ENCODE measurements at regions of chr20 and their contacts with region 1.

Region 1: GRCh38 chr20:53578492-53579222 is 15.0 kb downstream of the ZNF217 start:
- DNase-seq: peak in 1 of 2 donors; percentile 85
- ATAC-seq: peak; percentile 57 to 86 (median 77)
- H3K4me3 ChIP-seq: peak overlapping the region in 5 of 10 donors; percentile 5 to 33 (median 17)
- H3K27ac ChIP-seq: peak overlapping the region in 8 of 10 donors; percentile 12 to 86 (median 62)
- H3K4me1 ChIP-seq: peaks cover 3 to 75% (median 55%) of the 10 kb centered on the region in 9 donors
- H3K27me3 ChIP-seq: no peaks in the 10 kb centered on the region
- CTCF ChIP-seq: peak; percentile 80 to 95 (median 87)

Region 2: DNA sequence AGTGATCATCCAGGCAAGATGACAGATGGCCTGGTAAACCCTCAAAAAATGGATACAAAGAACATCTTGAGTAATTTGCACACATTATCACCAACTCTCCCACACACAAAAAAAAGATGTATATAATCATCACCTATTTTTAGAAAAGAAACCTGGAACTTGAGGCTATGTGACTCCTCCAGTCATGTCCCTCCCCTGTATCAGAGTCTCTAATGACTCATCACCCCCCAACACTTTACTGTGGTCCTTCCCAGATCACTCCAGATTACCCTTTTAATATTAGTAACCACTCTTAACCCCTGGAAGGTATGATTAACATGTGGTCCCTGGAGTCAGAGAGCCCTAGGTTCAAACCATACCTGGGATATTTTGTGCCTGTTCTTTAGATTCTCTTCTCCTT is 129.8 kb before region 1 on chr20:
- intact Hi-C with region 1: no loop called
- DNase-seq: no peak
- ATAC-seq: no peak
- H3K4me3 ChIP-seq: no peak overlapping the region
- H3K27ac ChIP-seq: no peak overlapping the region
- H3K4me1 ChIP-seq: peaks cover 0 to 15% (median 0%) of the 10 kb centered on the region in 9 donors
- H3K27me3 ChIP-seq: peaks cover 0 to 2% (median 0%) of the 10 kb centered on the region in 7 donors
- CTCF ChIP-seq: no peak

Region 3: GRCh38 chr20:53738039-53738944 is 159.6 kb after region 1 on chr20:
- intact Hi-C with region 1: loop called in 4 of 10 experiments (anchors 5 to 10 kb)
- DNase-seq: peak; percentile 53 to 59
- ATAC-seq: peak; percentile 74 to 92 (median 87)
- H3K4me3 ChIP-seq: peak overlapping the region in 6 of 10 donors; percentile 3 to 43 (median 24)
- H3K27ac ChIP-seq: peak overlapping the region; percentile 53 to 86 (median 79)
- H3K4me1 ChIP-seq: peaks cover 6 to 69% (median 47%) of the 10 kb centered on the region in 9 donors
- H3K27me3 ChIP-seq: no peaks in the 10 kb centered on the region
- CTCF ChIP-seq: no peak

Region 4: GRCh38 chr20:53875433-53875832 is 296.8 kb after region 1 on chr20:
- intact Hi-C with region 1: loop called in 4 of 10 experiments (anchors 5 to 10 kb)
- DNase-seq: no peak
- ATAC-seq: peak in 1 of 8 donors; percentile 53
- H3K4me3 ChIP-seq: peak overlapping the region in 1 of 10 donors; percentile 37
- H3K27ac ChIP-seq: peak overlapping the region in 2 of 10 donors; percentile 27 to 83
- H3K4me1 ChIP-seq: peaks cover 0 to 37% (median 13%) of the 10 kb centered on the region in 9 donors
- H3K27me3 ChIP-seq: no peaks in the 10 kb centered on the region
- CTCF ChIP-seq: no peak

Region 5: DNA sequence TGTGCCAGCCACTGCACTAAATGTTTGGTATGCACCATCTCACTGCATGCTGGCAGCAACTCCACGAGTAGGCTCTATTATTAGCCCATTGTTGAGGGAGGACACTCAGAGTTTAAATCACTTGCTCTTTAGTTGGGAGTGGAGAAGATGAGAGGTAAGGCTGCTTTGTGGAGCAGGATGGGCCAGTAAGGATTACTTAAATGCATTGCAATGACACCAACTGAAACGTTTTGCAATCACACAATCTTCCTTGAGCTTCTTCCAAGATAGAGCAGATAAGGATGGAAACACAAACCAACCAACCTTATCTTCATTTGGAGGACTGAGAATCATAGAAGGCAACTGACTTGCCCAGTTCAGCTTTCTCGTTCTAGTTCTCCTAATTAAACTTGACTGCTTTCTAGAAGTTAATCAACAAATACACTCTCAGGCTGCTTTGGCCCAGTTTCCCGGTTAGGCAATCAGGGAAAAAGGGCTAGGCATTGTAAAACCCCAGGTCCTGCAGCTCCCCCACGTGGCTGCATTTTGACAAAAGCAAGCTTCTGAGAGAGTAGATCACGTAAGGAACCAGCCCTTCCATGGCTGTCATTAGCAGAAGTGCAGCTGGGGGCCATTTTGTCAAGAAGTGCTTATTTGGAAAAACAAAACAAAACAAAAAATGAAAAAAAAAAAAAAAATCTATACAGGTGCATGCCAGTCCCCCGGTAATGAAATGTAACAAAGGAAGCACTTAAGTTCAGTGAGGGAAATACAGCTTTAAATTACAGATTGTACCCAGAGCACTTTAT is 361.1 kb after region 1 on chr20:
- intact Hi-C with region 1: loop called (anchors 2 to 5 kb)
- DNase-seq: peak; percentile 88 to 95
- ATAC-seq: peak; percentile 87 to 96 (median 94)
- H3K4me3 ChIP-seq: peak overlapping the region in 5 of 10 donors; percentile 17 to 36 (median 21)
- H3K27ac ChIP-seq: peak overlapping the region in 9 of 10 donors; percentile 59 to 85 (median 82)
- H3K4me1 ChIP-seq: peaks cover 7 to 65% (median 55%) of the 10 kb centered on the region in 9 donors
- H3K27me3 ChIP-seq: no peaks in the 10 kb centered on the region
- CTCF ChIP-seq: peak; percentile 60 to 87 (median 80)

Region 6: DNA sequence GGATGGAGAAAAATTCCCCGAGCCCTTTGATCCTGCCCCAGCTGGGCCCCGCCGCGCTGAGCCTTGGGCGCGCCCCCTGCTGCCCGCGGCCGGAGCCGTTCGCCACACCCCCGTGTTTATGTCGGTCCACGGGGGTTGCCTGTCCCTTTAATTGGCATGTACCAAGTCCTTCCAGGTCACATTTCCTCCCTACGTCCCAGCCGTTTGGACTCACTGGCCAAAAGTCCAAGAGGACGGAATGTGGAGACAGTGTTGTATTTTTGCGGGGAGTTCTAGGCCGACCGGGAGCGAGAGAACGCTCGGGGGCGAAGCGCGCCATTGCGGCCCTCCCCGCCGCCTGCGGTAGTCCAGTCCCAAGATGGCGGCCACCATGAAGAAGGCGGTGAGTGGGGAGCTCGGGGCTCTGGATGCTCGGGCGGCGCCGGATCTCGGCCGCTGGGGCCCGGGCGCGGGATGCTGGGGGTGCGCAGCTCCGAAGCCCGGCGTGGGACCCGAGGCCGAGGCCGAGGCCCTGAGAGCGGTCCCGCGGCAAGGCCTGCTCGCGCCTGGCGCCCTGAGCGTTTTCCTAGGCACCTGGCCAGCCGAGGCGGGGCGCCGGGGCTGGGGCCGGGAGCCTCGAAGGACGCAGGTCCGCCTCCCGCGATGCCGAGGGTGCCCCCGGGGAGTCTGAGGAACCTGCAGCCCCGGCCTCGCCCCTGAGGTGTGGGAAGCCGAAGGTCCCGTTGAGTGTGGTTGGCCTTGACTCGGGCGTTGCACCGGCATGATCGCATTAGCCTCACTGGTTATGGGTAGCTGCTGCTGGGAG is 629.3 kb after region 1 on chr20 and contains the start of gene PFDN4:
- intact Hi-C with region 1: loop called in 1 of 10 experiments (anchors 10 kb)
- DNase-seq: peak; percentile 82 to 85
- ATAC-seq: peak; percentile 96 to 98 (median 97)
- H3K4me3 ChIP-seq: peak within 1 kb of the TSS; percentile 76 to 99 (median 91)
- H3K27ac ChIP-seq: peak within 1 kb of the TSS; percentile 94 to 100 (median 99)
- H3K4me1 ChIP-seq: peaks cover 0 to 33% (median 23%) of the 10 kb centered on the region in 9 donors
- H3K27me3 ChIP-seq: no peaks in the 10 kb centered on the region
- CTCF ChIP-seq: peak; percentile 74 to 97 (median 89)
- total RNA-seq, gene PFDN4: 21.9 to 37.0 (median 28.2) TPM